ENCODE measurements at regions of chr5 and their contacts with region 1.

Region 1: GRCh38 chr5:104178829-104179456 is 616.4 kb upstream of the NUDT12 start:
- DNase-seq: peak; percentile 42
- H3K4me3 ChIP-seq: no peak overlapping the region
- H3K27ac ChIP-seq: no peak overlapping the region
- H3K4me1 ChIP-seq: no peaks in the 10 kb centered on the region
- H3K27me3 ChIP-seq: no peaks in the 10 kb centered on the region
- CTCF ChIP-seq: peak; percentile 37 to 72

Region 2: DNA sequence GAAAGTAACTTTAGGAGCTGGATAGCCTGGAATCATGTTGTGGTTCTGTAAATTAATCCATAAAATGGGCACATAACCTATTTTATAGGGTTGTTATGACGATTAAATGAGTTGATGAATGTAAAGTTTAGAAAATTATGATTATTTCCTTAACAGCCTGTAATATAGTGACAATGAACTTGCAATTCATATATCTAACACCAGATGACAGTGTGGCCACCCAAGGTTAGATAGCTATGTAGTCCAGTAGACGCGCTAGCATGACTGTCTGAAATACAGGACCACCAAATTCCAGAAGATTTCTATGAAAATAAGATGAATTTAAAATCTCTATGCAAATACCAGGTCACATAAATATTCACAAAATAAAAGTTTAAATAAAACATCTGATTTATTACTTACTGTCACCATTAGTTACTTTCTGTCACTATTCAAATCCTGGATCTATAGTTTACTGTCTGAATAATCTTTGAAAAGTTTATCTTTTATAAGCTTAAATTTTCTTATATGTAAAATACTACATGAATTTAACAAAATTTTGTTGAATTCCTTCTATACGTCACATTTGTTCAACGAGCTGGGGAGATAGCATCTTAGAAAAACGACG is 946.4 kb before region 1 on chr5:
- CTCF ChIA-PET with region 1: no interaction called
- dilution Hi-C with region 1: no loop called
- in situ Hi-C with region 1: no loop called
- intact Hi-C with region 1: loop called (anchors 5 kb)
- DNase-seq: peak; percentile 11
- H3K4me3 ChIP-seq: no peak overlapping the region
- H3K27ac ChIP-seq: no peak overlapping the region
- H3K4me1 ChIP-seq: no peaks in the 10 kb centered on the region
- H3K27me3 ChIP-seq: no peaks in the 10 kb centered on the region
- CTCF ChIP-seq: peak; percentile 88 to 96

Region 3: DNA sequence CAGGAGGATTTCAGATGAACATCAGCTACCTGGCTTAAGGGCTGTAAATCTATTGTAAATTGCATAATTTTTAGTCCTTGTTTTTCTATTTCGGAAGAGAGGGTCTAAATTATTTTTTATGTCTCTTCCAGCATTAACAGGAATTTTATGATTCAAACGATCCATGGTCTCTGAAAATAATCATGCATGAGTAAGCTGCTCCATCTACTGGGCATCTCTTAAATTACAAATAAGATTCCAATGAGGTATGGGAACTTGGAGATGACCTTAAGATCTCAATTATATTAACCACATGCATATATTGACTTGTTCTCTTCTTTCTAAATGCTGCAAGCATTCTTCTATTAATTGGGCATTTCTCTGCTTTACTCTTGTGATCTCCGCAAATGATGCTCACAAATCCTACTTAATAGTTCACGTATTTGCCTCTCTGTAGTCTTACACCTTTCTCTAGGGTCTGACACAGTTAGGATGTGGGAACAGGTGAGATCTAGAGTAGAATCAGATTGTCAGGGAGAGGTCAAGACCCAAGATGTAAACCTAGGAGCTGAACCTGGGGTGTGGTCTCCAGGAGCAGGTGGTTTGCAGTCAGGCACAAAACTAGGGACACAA is 703.2 kb before region 1 on chr5:
- CTCF ChIA-PET with region 1: no interaction called
- dilution Hi-C with region 1: no loop called
- in situ Hi-C with region 1: no loop called
- intact Hi-C with region 1: loop called (anchors 5 kb)
- DNase-seq: peak; percentile 32
- H3K4me3 ChIP-seq: no peak overlapping the region
- H3K27ac ChIP-seq: no peak overlapping the region
- H3K4me1 ChIP-seq: no peaks in the 10 kb centered on the region
- H3K27me3 ChIP-seq: no peaks in the 10 kb centered on the region
- CTCF ChIP-seq: peak; percentile 56 to 61

Region 4: GRCh38 chr5:103582364-103582763 is 596.6 kb before region 1 on chr5:
- CTCF ChIA-PET with region 1: interaction called, 4 read pairs
- dilution Hi-C with region 1: loop called (anchors 25 kb)
- in situ Hi-C with region 1: loop called (anchors 10 to 25 kb)
- intact Hi-C with region 1: loop called (anchors 1 kb)
- DNase-seq: peak; percentile 32
- H3K4me3 ChIP-seq: no peak overlapping the region
- H3K27ac ChIP-seq: no peak overlapping the region
- H3K4me1 ChIP-seq: no peaks in the 10 kb centered on the region
- H3K27me3 ChIP-seq: no peaks in the 10 kb centered on the region
- CTCF ChIP-seq: peak; percentile 52 to 57

Region 5: DNA sequence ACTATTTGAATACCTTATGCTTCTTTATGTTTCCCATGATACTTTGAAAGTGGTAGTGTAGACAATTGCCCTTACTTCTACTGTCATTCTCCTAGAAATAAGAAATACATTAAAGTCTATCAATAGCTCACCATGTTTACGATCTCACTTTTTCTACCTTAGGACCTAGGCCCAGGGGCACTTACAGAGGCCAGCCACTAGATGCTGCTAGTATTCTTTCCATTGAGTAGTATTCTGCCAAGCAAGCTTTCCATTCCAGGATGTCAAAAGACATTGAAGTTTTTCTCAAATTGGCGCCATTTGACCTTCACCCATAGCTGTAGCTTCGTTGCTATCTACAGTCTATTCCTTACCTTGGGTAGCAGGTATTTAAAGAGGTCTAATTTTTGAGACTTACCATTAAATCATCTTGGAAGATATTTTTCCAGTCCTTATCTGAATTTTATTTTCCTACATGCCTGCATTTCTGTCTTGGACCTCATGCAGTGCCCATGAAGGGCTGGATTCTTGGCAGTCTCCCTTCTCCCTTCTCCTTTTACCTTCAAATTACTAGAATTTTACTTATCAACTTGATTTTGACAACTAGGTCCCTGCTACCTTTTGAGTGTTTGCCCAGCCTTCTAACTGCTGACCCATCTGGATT is 370.4 kb before region 1 on chr5:
- CTCF ChIA-PET with region 1: interaction called, 3 read pairs
- dilution Hi-C with region 1: no loop called
- in situ Hi-C with region 1: loop called (anchors 10 to 25 kb)
- intact Hi-C with region 1: loop called (anchors 1 kb)
- DNase-seq: peak; percentile 40
- H3K4me3 ChIP-seq: no peak overlapping the region
- H3K27ac ChIP-seq: no peak overlapping the region
- H3K4me1 ChIP-seq: no peaks in the 10 kb centered on the region
- H3K27me3 ChIP-seq: no peaks in the 10 kb centered on the region
- CTCF ChIP-seq: peak; percentile 99 to 100

Region 6: GRCh38 chr5:104111632-104112031 is 67.3 kb before region 1 on chr5:
- CTCF ChIA-PET with region 1: no interaction called
- dilution Hi-C with region 1: no loop called
- in situ Hi-C with region 1: no loop called
- intact Hi-C with region 1: loop called (anchors 2 kb)
- DNase-seq: no peak
- H3K4me3 ChIP-seq: no peak overlapping the region
- H3K27ac ChIP-seq: no peak overlapping the region
- H3K4me1 ChIP-seq: no peaks in the 10 kb centered on the region
- H3K27me3 ChIP-seq: no peaks in the 10 kb centered on the region
- CTCF ChIP-seq: no peak